Naive thymus-derived CD4-positive, alpha-beta T cell (primary cell): ENCODE measurements at regions of chr19 and their contacts with region 1.

Region 1: GRCh38 chr19:50922317-50922853 is 11.2 kb upstream of the KLK4 start:
- DNase-seq: peak; percentile 47 to 79 (median 66)
- ATAC-seq: peak; percentile 96
- H3K4me3 ChIP-seq: no peak overlapping the region
- H3K4me3 Mint-ChIP-seq: peak overlapping the region in 1 of 10 donors; percentile 27
- H3K27ac ChIP-seq: no peak overlapping the region
- H3K27ac Mint-ChIP-seq: no peak overlapping the region
- H3K4me1 ChIP-seq: no peaks in the 10 kb centered on the region
- H3K4me1 Mint-ChIP-seq: peaks cover 2 to 10% (median 8%) of the 10 kb centered on the region in 7 donors
- H3K27me3 ChIP-seq: peaks cover 0 to 3% of the 10 kb centered on the region in 2 donors
- H3K27me3 Mint-ChIP-seq: peaks cover 28 to 53% (median 45%) of the 10 kb centered on the region in 5 donors

Region 2: DNA sequence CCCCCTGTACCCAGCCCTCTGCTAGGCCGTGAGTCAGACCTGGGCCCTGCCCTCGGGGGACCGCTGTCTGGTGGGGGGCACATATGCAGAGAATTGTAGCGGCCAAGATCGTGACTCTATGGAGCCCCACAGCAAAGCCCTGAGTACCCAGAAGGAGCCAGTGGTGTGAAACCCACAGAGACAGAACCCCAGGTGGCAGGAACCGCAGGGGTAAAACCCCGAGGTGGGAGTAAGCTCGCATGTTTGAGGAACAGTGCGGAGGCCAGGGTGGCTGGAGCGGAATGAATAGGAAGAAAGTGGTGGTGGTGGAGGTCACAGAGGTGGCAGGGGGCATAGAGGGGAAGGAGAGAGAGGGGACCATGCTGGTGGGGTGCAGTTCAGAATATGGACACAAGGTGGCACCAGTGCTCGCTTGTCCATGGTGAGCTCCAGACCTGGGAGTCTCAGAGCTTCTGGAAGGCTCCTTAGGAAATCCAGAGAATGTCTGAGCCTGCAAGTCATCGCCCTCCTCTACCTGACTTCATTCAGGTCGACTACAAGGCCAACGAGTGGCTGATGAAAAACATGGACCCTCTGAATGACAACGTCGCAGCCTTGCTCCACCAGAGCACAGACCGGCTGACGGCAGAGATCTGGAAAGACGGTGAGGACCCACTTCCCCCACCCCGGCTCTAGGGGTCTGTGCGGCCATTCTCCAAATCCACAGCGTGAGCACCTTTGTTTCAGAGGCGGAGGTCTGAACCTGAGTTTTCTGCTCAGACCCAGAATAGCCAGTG is 670.1 kb before region 1 on chr19:
- CTCF ChIA-PET with region 1: interaction called, 5 read pairs
- POLR2A ChIA-PET with region 1: no interaction called
- intact Hi-C with region 1: loop called in 1 of 2 experiments (anchors 5 kb)
- DNase-seq: peak in 2 of 9 donors; percentile 7 to 32
- ATAC-seq: no peak
- H3K4me3 ChIP-seq: no peak overlapping the region
- H3K4me3 Mint-ChIP-seq: no peak overlapping the region
- H3K27ac ChIP-seq: no peak overlapping the region
- H3K27ac Mint-ChIP-seq: no peak overlapping the region
- H3K4me1 ChIP-seq: no peaks in the 10 kb centered on the region
- H3K4me1 Mint-ChIP-seq: no peaks in the 10 kb centered on the region
- H3K27me3 ChIP-seq: no peaks in the 10 kb centered on the region
- H3K27me3 Mint-ChIP-seq: peaks cover 0 to 44% (median 27%) of the 10 kb centered on the region in 5 donors

Region 3: GRCh38 chr19:50537762-50538230 is 384.6 kb before region 1 on chr19:
- CTCF ChIA-PET with region 1: interaction called, 5 read pairs
- POLR2A ChIA-PET with region 1: no interaction called
- intact Hi-C with region 1: loop called in 1 of 2 experiments (anchors 2 kb)
- DNase-seq: peak in 8 of 9 donors; percentile 29 to 67 (median 40)
- ATAC-seq: peak; percentile 67
- H3K4me3 ChIP-seq: no peak overlapping the region
- H3K4me3 Mint-ChIP-seq: no peak overlapping the region
- H3K27ac ChIP-seq: no peak overlapping the region
- H3K27ac Mint-ChIP-seq: peak overlapping the region in 1 of 9 donors; percentile 38
- H3K4me1 ChIP-seq: no peaks in the 10 kb centered on the region
- H3K4me1 Mint-ChIP-seq: peaks cover 0 to 5% (median 0%) of the 10 kb centered on the region in 7 donors
- H3K27me3 ChIP-seq: no peaks in the 10 kb centered on the region
- H3K27me3 Mint-ChIP-seq: peaks cover 0 to 23% (median 12%) of the 10 kb centered on the region in 5 donors

Region 4: GRCh38 chr19:50724522-50725217 is 197.7 kb before region 1 on chr19:
- CTCF ChIA-PET with region 1: no interaction called
- POLR2A ChIA-PET with region 1: no interaction called
- intact Hi-C with region 1: loop called in 1 of 2 experiments (anchors 10 kb)
- DNase-seq: peak; percentile 74 to 99 (median 94)
- ATAC-seq: peak; percentile 93
- H3K4me3 ChIP-seq: peak overlapping the region; percentile 62
- H3K4me3 Mint-ChIP-seq: peak overlapping the region; percentile 79 to 92 (median 84)
- H3K27ac ChIP-seq: peak overlapping the region; percentile 66
- H3K27ac Mint-ChIP-seq: peak overlapping the region in 8 of 9 donors; percentile 34 to 87 (median 70)
- H3K4me1 ChIP-seq: peaks cover 5 to 12% of the 10 kb centered on the region in 2 donors
- H3K4me1 Mint-ChIP-seq: peaks cover 0 to 34% (median 24%) of the 10 kb centered on the region in 7 donors
- H3K27me3 ChIP-seq: peaks cover 5 to 12% of the 10 kb centered on the region in 2 donors
- H3K27me3 Mint-ChIP-seq: peaks cover 47 to 70% (median 53%) of the 10 kb centered on the region in 5 donors

Region 5: GRCh38 chr19:50906217-50906616 is 16.2 kb before region 1 on chr19:
- CTCF ChIA-PET with region 1: interaction called, 4 read pairs
- POLR2A ChIA-PET with region 1: no interaction called
- intact Hi-C with region 1: loop called in 1 of 2 experiments (anchors 1 kb)
- DNase-seq: peak in 2 of 9 donors; percentile 9 to 44
- ATAC-seq: no peak
- H3K4me3 ChIP-seq: no peak overlapping the region
- H3K4me3 Mint-ChIP-seq: no peak overlapping the region
- H3K27ac ChIP-seq: no peak overlapping the region
- H3K27ac Mint-ChIP-seq: no peak overlapping the region
- H3K4me1 ChIP-seq: no peaks in the 10 kb centered on the region
- H3K4me1 Mint-ChIP-seq: peaks cover 0 to 11% (median 6%) of the 10 kb centered on the region in 7 donors
- H3K27me3 ChIP-seq: peaks cover 0 to 3% of the 10 kb centered on the region in 2 donors
- H3K27me3 Mint-ChIP-seq: peaks cover 39 to 73% (median 69%) of the 10 kb centered on the region in 5 donors

Region 6: DNA sequence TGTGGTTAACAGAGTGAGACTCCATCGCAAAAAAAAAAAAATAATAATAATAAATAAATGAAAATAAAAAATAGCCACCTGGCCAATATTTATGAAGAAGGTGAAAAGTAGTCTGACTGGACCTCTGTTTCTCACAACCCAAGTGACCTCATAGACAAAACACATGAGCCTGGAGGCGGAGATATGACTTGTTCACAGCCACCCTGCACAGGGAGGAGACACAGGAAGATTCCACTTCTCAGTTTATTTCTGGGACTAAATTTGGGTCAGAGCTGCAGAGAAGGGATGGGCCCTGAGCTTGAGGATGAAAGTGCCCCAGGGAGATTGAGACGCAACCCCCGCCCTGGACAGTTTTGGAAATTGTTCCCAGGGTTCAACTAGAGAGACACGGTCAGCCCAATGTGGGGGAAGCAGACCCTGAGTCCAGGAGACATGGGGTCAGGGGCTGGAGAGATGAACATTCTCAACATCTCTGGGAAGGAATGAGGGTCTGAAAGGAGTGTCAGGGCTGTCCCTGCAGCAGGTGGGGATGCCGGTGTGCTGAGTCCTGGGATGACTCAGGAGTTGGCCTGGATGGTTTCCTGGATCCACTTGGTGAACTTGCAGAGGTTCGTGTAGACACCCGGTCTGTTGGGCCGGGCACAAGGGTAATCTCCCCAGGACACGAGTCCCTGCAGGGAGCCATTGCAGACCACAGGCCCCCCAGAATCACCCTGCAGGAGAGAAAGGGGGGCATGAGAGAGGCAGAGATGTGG is 20.9 kb after region 1 on chr19:
- CTCF ChIA-PET with region 1: no interaction called
- POLR2A ChIA-PET with region 1: no interaction called
- intact Hi-C with region 1: no loop called
- DNase-seq: no peak
- ATAC-seq: no peak
- H3K4me3 ChIP-seq: no peak overlapping the region
- H3K4me3 Mint-ChIP-seq: no peak overlapping the region
- H3K27ac ChIP-seq: no peak overlapping the region
- H3K27ac Mint-ChIP-seq: no peak overlapping the region
- H3K4me1 ChIP-seq: no peaks in the 10 kb centered on the region
- H3K4me1 Mint-ChIP-seq: no peaks in the 10 kb centered on the region
- H3K27me3 ChIP-seq: no peaks in the 10 kb centered on the region
- H3K27me3 Mint-ChIP-seq: peaks cover 2 to 58% (median 43%) of the 10 kb centered on the region in 5 donors